ENCODE measurements at regions of chr1 and their contacts with region 1.

Region 1: DNA sequence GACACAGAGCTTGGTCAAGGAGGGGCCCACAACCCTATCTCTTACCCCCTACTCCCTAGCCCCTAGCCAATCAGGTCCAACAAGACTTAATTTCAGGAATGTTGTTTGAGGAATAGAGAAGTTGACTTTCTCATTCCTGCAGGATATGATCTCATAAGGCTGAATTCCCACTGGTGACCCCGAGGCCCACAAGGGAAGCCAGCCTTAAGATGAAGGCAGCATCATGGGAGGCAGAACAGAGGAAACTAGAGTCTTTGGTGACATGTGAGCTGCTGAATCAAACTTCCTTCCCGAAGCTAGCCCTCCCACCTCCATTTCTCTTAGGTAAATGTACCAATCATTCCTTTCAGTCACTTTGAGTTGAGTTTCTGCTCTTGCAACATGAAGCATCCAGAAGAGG is 9.1 kb upstream of the PDIK1L start:
- DNase-seq: no peak
- H3K4me3 ChIP-seq: no peak overlapping the region
- H3K27ac ChIP-seq: no peak overlapping the region
- H3K4me1 ChIP-seq: peaks cover 0 to 4% (median 0%) of the 10 kb centered on the region in 4 donors
- H3K27me3 ChIP-seq: peaks cover 0 to 5% (median 0%) of the 10 kb centered on the region in 4 donors
- CTCF ChIP-seq: no peak
- EP300 ChIP-seq: no peak
- POLR2A ChIP-seq: no peak

Region 2: GRCh38 chr1:26145041-26145959 is 42.8 kb after region 1 on chr1:
- intact Hi-C with region 1: loop called (anchors 2 kb)
- DNase-seq: peak; percentile 93
- H3K4me3 ChIP-seq: no peak overlapping the region
- H3K27ac ChIP-seq: no peak overlapping the region
- H3K4me1 ChIP-seq: peaks cover 2 to 10% (median 6%) of the 10 kb centered on the region in 4 donors
- H3K27me3 ChIP-seq: peaks cover 0 to 23% (median 0%) of the 10 kb centered on the region in 4 donors
- CTCF ChIP-seq: peak; percentile 74 to 79 (median 78)
- EP300 ChIP-seq: no peak
- POLR2A ChIP-seq: no peak